ENCODE measurements at regions of chr5 and their contacts with region 1.

Region 1: GRCh38 chr5:59193616-59194319 is 610.9 kb downstream of the RAB3C start:
- ATAC-seq: peak in 6 of 8 experiments; percentile 62 to 99 (median 98)
- H3K4me3 ChIP-seq: no peak overlapping the region
- H3K27ac ChIP-seq: no peak overlapping the region
- H3K4me1 ChIP-seq: no peaks in the 10 kb centered on the region

Region 2: GRCh38 chr5:57791875-57792274 is 1401.9 kb before region 1 on chr5:
- in situ Hi-C with region 1: no loop called
- ATAC-seq: no peak
- H3K4me3 ChIP-seq: no peak overlapping the region
- H3K27ac ChIP-seq: no peak overlapping the region
- H3K4me1 ChIP-seq: peaks cover 0 to 5% of the 10 kb centered on the region in 2 donors

Region 3: DNA sequence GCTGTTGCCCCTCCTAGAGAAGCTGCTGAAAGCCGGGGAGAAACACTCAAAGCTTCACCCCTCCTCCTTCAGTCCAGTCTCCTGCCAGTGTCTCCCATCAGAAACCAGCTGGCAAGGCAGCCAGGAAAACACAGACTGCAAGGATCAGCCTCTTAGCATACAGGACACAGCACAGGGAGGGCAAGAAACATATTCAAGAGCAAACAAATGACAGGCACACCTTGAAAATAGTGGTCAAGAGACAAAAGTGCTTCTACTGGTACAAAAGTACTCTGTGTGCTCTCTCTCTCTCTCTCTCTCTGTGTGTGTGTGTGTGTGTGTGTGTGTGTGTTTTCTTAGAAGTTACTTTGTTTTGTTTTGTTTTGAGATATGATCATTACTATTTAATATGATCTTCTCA is 383.7 kb before region 1 on chr5:
- in situ Hi-C with region 1: no loop called
- ATAC-seq: no peak
- H3K4me3 ChIP-seq: no peak overlapping the region
- H3K27ac ChIP-seq: no peak overlapping the region
- H3K4me1 ChIP-seq: peaks cover 8 to 18% of the 10 kb centered on the region in 2 donors

Region 4: GRCh38 chr5:58828258-58828657 is 365.5 kb before region 1 on chr5:
- in situ Hi-C with region 1: no loop called
- ATAC-seq: peak; percentile 68 to 98 (median 82)
- H3K4me3 ChIP-seq: peak overlapping the region in 1 of 5 donors; percentile 2
- H3K27ac ChIP-seq: peak overlapping the region in 1 of 2 donors; percentile 83
- H3K4me1 ChIP-seq: peaks cover 20 to 38% of the 10 kb centered on the region in 2 donors

Region 5: GRCh38 chr5:59371525-59372127 is 177.9 kb after region 1 on chr5:
- in situ Hi-C with region 1: loop called in 4 of 9 experiments (anchors 10 to 25 kb)
- ATAC-seq: no peak
- H3K4me3 ChIP-seq: no peak overlapping the region
- H3K27ac ChIP-seq: no peak overlapping the region
- H3K4me1 ChIP-seq: no peaks in the 10 kb centered on the region

Measured in motor neuron (in vitro differentiated cells).